Aorta (tissue), 5 donors: ENCODE measurements at regions of chr7 and their contacts with region 1.

Region 1: GRCh38 chr7:116443101-116443523 is 56.4 kb upstream of the CAV2 start:
- DNase-seq: no peak
- ATAC-seq: peak; percentile 27
- H3K4me3 ChIP-seq: no peak overlapping the region
- H3K27ac ChIP-seq: no peak overlapping the region
- H3K4me1 ChIP-seq: peaks cover 1 to 12% of the 10 kb centered on the region in 2 donors
- H3K27me3 ChIP-seq: no peaks in the 10 kb centered on the region

Region 2: GRCh38 chr7:116165717-116166116 is 277.4 kb before region 1 on chr7:
- intact Hi-C with region 1: no loop called
- DNase-seq: peak in 1 of 2 donors; percentile 38
- ATAC-seq: no peak
- H3K4me3 ChIP-seq: no peak overlapping the region
- H3K27ac ChIP-seq: no peak overlapping the region
- H3K4me1 ChIP-seq: no peaks in the 10 kb centered on the region
- H3K27me3 ChIP-seq: no peaks in the 10 kb centered on the region

Region 3: DNA sequence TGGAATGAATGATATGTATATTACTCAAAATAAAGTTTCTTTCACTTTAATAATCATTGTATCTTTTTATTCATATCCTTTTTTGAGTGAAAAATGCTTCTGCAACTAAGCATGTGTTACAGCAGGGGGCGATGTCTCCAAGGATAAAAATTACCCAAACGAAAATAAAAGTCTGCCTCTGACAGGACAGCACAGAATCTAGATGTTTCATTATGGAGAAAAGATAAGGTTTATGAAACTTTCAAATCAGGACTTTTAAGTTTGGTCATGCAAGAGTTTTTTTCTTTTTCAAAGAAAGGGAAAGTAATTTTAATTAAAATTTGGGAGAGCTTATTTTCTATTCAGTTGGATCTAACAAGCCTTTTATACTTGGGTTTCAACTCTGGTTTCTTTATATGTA is 184.4 kb before region 1 on chr7:
- intact Hi-C with region 1: loop called in 1 of 2 experiments (anchors 5 kb)
- DNase-seq: no peak
- ATAC-seq: peak; percentile 80
- H3K4me3 ChIP-seq: no peak overlapping the region
- H3K27ac ChIP-seq: peak overlapping the region in 1 of 2 donors; percentile 22
- H3K4me1 ChIP-seq: peaks cover 0 to 2% of the 10 kb centered on the region in 2 donors
- H3K27me3 ChIP-seq: no peaks in the 10 kb centered on the region

Region 4: DNA sequence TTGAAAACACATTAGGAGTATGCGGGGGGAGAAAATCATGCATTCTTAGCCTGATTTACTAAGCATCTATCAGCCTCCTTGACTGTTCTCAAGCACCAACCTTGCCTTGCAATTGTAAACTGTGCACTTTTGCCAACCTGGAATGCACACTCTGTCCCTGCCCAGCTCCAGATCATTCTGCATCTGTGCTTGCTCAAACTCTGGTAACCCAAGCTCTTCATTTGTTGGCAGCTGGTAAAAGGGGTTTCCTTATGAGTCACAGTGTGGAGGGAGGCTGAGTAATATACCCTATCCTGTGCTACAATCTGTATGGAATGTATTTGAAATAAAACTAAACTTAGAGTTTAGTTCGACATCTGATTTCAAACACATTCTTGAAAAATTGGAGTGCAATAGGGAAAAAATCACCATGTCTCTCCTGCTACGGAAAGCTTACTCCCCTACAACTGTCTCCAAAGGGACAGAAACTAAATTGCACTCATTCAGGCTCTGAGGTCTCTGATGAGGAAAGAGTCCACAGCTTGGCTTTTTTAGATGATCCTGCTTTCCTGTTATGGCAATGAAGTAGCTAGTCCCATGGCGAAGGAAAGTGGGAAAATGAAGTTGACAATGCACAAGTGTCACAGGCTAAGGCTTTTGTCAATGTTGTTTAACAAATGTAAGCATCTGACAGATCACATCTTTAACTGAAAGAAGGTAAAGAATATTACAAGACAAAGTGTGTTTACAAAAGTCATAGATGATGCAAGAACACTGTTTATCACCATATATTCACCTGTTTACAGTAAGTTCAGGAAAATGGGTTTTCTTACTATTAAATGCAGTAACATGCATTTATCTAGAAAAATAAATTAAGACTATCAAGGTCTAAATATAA is 170.9 kb before region 1 on chr7:
- intact Hi-C with region 1: loop called in 1 of 2 experiments (anchors 5 kb)
- DNase-seq: peak in 1 of 2 donors; percentile 50
- ATAC-seq: peak; percentile 90
- H3K4me3 ChIP-seq: no peak overlapping the region
- H3K27ac ChIP-seq: peak overlapping the region; percentile 76 to 97
- H3K4me1 ChIP-seq: peaks cover 3 to 14% of the 10 kb centered on the region in 2 donors
- H3K27me3 ChIP-seq: no peaks in the 10 kb centered on the region

Region 5: DNA sequence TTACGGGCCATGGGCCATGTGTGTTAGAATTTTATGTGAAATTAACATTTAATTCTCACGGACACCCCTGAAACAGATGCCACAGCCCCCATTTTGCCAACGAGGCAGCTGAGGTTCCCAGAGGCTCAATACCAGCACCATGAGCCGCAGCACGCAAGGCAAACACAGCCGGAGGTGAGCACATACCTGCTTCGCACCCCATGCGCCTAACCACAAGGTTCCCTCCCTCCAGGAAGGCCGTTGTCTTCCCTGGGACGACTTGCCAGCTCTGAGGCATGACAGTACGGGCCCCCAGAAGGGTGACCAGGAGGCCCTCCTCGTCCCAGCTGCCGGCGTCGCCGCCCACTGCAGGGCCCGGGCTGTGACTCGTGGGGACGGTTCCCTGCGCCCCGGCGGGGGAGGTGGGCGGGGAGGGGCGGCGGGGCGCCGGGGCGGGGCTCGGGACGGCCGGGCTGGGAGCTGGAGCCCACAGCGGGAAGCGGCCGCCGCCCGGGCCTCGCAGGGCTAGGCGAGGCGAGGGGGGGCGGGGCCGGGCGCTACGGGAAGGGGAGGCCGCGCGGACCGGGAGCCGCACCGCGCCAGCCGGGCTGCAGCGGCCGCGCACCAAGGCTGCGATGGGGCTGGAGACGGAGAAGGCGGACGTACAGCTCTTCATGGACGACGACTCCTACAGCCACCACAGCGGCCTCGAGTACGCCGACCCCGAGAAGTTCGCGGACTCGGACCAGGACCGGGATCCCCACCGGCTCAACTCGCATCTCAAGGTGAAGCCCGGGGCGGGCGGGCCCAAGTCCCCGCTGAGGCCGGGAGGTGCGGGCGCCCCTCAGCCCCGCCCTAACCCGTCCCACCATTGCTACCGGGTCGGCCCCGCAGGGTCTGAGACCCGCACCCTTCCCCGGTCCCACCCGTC is 56.3 kb after region 1 on chr7 and contains the start of gene CAV2:
- intact Hi-C with region 1: loop called in 1 of 2 experiments (anchors 5 kb)
- DNase-seq: peak; percentile 81 to 93
- ATAC-seq: peak; percentile 91
- H3K4me3 ChIP-seq: peak within 1 kb of the TSS; percentile 60 to 80
- H3K27ac ChIP-seq: peak within 1 kb of the TSS; percentile 20 to 90
- H3K4me1 ChIP-seq: no peaks in the 10 kb centered on the region
- H3K27me3 ChIP-seq: no peaks in the 10 kb centered on the region
- total RNA-seq, gene CAV2: 86.7 to 131 TPM

Region 6: DNA sequence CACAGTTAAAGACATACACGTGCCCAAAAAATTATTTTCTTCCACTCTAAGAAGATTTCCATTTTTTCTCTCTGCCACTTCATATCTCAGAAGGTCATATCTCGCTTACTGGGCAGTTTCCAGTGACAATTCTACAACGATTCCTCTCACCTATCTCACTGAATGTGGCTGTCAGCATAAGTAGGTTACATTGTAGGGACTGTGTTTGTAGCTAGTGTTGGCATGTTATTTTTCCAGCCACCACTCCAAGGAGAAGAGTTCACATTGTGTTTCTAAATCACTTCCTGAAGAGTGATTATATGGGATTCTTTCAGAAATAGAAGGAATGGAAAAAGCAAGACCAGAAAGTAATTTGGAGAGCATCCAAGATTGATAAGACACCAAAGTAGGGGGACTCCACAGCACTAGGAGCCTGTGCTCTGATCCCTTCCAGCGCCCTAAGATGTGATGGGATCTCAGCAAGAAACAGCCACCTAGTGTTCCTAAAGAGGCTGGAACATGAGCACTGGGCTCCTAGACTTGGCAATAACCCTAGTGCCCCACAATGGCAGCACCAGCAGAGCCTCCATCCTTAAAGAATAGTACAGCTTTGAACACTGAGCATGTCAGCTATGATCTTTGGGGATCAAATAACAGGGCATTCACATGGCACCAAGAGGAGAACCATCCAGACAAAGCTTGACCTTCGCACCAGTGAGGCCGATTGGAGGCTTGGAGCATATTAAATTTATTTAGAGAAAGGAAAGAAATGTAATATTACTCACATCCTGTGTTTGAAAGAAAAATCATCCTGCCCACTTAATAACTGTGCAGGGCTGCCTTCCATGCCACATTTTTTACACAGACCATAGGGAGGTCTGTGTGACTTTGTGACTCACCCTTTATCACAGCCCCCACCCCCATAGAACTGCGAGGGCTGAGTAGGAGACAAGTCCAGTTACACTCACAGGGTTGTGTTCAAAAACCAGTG is 133.5 kb after region 1 on chr7:
- intact Hi-C with region 1: loop called (anchors 5 to 10 kb)
- DNase-seq: peak; percentile 76 to 83
- ATAC-seq: peak; percentile 82
- H3K4me3 ChIP-seq: no peak overlapping the region
- H3K27ac ChIP-seq: peak overlapping the region; percentile 91 to 93
- H3K4me1 ChIP-seq: peaks cover 5 to 9% of the 10 kb centered on the region in 2 donors
- H3K27me3 ChIP-seq: no peaks in the 10 kb centered on the region

Region 7: DNA sequence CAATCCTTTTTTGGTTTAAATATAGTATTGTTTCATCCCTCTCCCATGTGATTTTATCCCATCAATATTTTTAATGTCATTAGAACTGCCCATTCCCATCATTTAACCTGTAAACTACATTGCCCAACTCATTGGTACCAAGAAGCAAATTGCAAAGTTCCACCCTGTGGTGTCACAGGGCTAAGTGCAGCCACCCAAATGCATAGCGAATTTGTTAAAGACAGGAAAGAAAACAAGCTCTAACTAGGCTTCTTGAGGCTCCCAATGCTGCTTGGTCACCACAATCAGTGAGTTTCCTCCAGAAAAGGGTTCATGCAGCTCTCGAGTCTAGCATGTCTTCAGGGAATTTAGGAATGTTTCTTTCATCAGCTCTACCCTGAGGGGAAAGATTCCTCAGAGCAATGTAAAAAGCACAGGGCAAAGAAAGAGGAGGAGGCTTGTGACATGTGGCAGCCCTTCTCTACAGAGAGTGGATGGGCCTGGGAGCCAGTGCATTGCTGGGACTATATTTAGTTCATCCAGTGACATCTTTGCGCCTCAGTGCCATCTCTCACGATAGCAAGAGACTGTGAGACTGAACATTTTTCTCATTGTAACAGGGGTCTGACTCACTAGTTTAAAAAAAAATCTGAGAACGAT is 139.8 kb after region 1 on chr7:
- intact Hi-C with region 1: loop called (anchors 5 to 10 kb)
- DNase-seq: no peak
- ATAC-seq: peak; percentile 75
- H3K4me3 ChIP-seq: no peak overlapping the region
- H3K27ac ChIP-seq: peak overlapping the region; percentile 58 to 80
- H3K4me1 ChIP-seq: peaks cover 0 to 3% of the 10 kb centered on the region in 2 donors
- H3K27me3 ChIP-seq: no peaks in the 10 kb centered on the region

Region 8: GRCh38 chr7:117489911-117490310 is 1046.8 kb after region 1 on chr7:
- intact Hi-C with region 1: no loop called
- DNase-seq: no peak
- ATAC-seq: no peak
- H3K4me3 ChIP-seq: no peak overlapping the region
- H3K27ac ChIP-seq: no peak overlapping the region
- H3K4me1 ChIP-seq: no peaks in the 10 kb centered on the region
- H3K27me3 ChIP-seq: peaks cover 0 to 5% of the 10 kb centered on the region in 2 donors